IMR-90 (cell line): ENCODE measurements at regions of chr10 and their contacts with region 1.

Region 1: DNA sequence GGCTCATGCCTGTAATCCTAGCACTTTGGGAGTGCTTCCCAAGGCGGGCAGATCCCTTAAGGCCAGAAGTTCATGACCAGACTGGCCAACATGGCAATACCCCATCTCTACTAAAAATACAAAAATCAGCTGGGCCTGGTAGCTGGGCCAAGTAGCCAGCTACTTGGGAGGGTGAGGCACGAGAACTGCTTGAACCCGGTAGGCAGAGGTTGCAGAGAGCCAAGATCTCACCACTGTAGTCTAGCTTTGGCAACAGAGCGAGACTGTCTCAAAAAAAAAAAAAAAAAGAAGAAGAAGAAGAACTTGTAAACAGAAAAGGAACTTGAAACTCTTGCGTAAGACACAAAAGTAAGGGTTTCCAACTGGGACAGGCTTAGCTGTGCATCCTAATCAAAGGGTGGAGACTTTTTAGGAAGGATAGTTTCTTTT is 5.6 kb upstream of the IFIT2 start:
- DNase-seq: peak; percentile 79
- ATAC-seq: peak; percentile 56
- H3K4me3 ChIP-seq: no peak overlapping the region
- H3K27ac ChIP-seq: peak overlapping the region; percentile 87
- H3K4me1 ChIP-seq: peaks cover 6% of the 10 kb centered on the region
- H3K27me3 ChIP-seq: no peaks in the 10 kb centered on the region
- CTCF ChIP-seq: no peak
- POLR2A ChIP-seq: no peak
- RAD21 ChIP-seq: no peak

Region 2: DNA sequence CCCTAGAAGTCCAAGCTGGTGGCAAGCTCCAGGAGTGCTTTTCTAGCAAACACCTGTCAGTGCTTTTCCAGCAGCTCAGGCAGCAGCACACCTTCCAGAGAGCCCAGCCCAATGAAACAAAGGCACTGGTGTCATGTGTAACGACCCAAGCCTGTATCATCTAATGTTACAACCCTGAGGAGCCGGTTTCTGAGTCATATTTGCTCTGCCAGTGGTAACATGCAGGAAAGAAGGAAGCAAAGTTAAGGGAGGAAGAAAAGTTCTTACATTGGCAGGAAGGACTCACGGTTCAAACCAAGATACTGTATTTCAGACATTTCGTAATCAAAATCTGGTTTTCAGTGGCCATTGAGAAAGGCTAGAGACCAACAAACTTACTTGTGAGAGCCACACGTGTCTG is 444.5 kb before region 1 on chr10 and contains the start of gene ANKRD22:
- CTCF ChIA-PET with region 1: no interaction called
- POLR2A ChIA-PET with region 1: no interaction called
- dilution Hi-C with region 1: no loop called
- in situ Hi-C with region 1: no loop called
- intact Hi-C with region 1: loop called (anchors 5 kb)
- DNase-seq: peak; percentile 75
- ATAC-seq: peak; percentile 70; the same call in 1 of the 2 replicates
- H3K4me3 ChIP-seq: no peak within 1 kb of the TSS
- H3K27ac ChIP-seq: no peak within 1 kb of the TSS
- H3K4me1 ChIP-seq: peaks cover 7% of the 10 kb centered on the region
- H3K27me3 ChIP-seq: no peaks in the 10 kb centered on the region
- CTCF ChIP-seq: no peak
- POLR2A ChIP-seq: no peak
- RAD21 ChIP-seq: no peak
- total RNA-seq, gene ANKRD22: not detected in 2 replicates

Region 3: GRCh38 chr10:89392974-89393373 is 96.7 kb after region 1 on chr10:
- CTCF ChIA-PET with region 1: no interaction called
- POLR2A ChIA-PET with region 1: no interaction called
- dilution Hi-C with region 1: no loop called
- in situ Hi-C with region 1: no loop called
- intact Hi-C with region 1: no loop called
- DNase-seq: peak; percentile 92
- ATAC-seq: peak; percentile 77
- H3K4me3 ChIP-seq: peak overlapping the region; percentile 68
- H3K27ac ChIP-seq: peak overlapping the region; percentile 86; the same call in 1 of the 2 replicates
- H3K4me1 ChIP-seq: no peaks in the 10 kb centered on the region; the same call in 1 of the 2 replicates
- H3K27me3 ChIP-seq: no peaks in the 10 kb centered on the region
- CTCF ChIP-seq: no peak
- POLR2A ChIP-seq: no peak
- RAD21 ChIP-seq: no peak

Region 4: GRCh38 chr10:89440245-89441009 is 144.2 kb after region 1 on chr10:
- CTCF ChIA-PET with region 1: no interaction called
- POLR2A ChIA-PET with region 1: no interaction called
- dilution Hi-C with region 1: no loop called
- in situ Hi-C with region 1: no loop called
- intact Hi-C with region 1: no loop called
- DNase-seq: no peak
- ATAC-seq: no peak
- H3K4me3 ChIP-seq: no peak overlapping the region
- H3K27ac ChIP-seq: no peak overlapping the region
- H3K4me1 ChIP-seq: peaks cover 3% of the 10 kb centered on the region
- H3K27me3 ChIP-seq: no peaks in the 10 kb centered on the region
- CTCF ChIP-seq: no peak
- POLR2A ChIP-seq: no peak
- RAD21 ChIP-seq: no peak

Region 5: DNA sequence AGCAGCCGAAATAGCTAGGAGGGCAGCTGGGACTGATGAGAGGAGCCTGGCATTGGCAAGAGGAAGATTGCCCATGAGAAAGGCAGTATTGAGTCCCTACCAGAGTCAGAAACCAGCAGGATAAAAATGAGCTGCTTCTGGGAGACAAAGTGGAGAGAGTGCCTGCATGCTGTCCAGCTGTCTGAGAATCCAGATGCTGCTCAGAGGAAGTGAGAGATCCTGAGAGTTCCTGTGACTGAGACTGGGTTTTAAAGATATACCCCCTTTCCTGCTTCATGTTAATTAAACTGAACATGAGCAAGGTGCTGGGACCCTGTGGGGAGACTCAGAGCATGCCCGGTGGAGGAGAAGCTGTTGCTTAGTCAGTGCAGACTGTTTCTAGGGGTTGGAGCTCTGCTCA is 512.6 kb after region 1 on chr10:
- CTCF ChIA-PET with region 1: no interaction called
- POLR2A ChIA-PET with region 1: no interaction called
- dilution Hi-C with region 1: no loop called
- in situ Hi-C with region 1: no loop called
- intact Hi-C with region 1: no loop called
- DNase-seq: no peak
- ATAC-seq: no peak
- H3K4me3 ChIP-seq: no peak overlapping the region
- H3K27ac ChIP-seq: no peak overlapping the region
- H3K4me1 ChIP-seq: no peaks in the 10 kb centered on the region
- H3K27me3 ChIP-seq: peaks cover 18% of the 10 kb centered on the region
- CTCF ChIP-seq: no peak
- POLR2A ChIP-seq: no peak
- RAD21 ChIP-seq: no peak